ENCODE measurements at regions of chr16 and their contacts with region 1.

Region 1: GRCh38 chr16:19138601-19139000 is 24.8 kb downstream of the ITPRIPL2 start:
- DNase-seq: peak; percentile 91
- H3K4me3 ChIP-seq: no peak overlapping the region
- H3K27ac ChIP-seq: no peak overlapping the region
- H3K4me1 ChIP-seq: peaks cover 50% of the 10 kb centered on the region
- H3K27me3 ChIP-seq: no peaks in the 10 kb centered on the region
- CTCF ChIP-seq: no peak

Region 2: GRCh38 chr16:19094541-19095365 is 43.8 kb before region 1 on chr16:
- CTCF ChIA-PET with region 1: no interaction called
- dilution Hi-C with region 1: no loop called
- in situ Hi-C with region 1: no loop called
- intact Hi-C with region 1: no loop called
- DNase-seq: no peak
- H3K4me3 ChIP-seq: no peak overlapping the region
- H3K27ac ChIP-seq: no peak overlapping the region
- H3K4me1 ChIP-seq: peaks cover 7% of the 10 kb centered on the region
- H3K27me3 ChIP-seq: no peaks in the 10 kb centered on the region
- CTCF ChIP-seq: peak in 1 of 2 donors; percentile 5

Region 3: DNA sequence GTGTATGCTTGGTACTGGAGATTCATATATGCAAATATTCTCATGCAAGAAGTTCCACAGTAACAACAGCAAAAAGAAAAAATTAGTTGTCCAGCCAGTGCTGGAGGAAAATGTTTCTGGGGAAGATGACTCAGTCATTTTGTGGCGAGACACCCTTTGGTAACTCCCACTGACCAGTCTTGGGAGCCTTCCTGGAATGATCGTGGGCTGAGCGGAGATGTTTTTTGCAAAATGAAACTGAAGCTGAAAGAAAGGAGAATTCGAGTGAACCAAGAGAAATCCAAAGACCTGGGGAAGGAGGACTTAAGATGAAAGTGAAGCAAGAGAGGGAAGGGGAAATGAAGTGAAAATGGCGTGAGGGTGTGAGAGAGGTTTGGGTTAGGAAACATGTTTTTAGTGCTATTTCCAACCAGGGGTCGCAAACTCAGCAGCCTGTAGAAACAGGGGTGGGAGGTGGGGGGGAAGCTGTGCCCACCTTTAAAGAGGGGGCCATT is 19.6 kb before region 1 on chr16:
- CTCF ChIA-PET with region 1: interaction called, 5 read pairs
- dilution Hi-C with region 1: no loop called
- in situ Hi-C with region 1: no loop called
- intact Hi-C with region 1: loop called (anchors 2 kb)
- DNase-seq: peak; percentile 81
- H3K4me3 ChIP-seq: peak overlapping the region; percentile 47 to 61 (median 49)
- H3K27ac ChIP-seq: peak overlapping the region; percentile 90
- H3K4me1 ChIP-seq: peaks cover 69% of the 10 kb centered on the region
- H3K27me3 ChIP-seq: no peaks in the 10 kb centered on the region
- CTCF ChIP-seq: no peak

Region 4: DNA sequence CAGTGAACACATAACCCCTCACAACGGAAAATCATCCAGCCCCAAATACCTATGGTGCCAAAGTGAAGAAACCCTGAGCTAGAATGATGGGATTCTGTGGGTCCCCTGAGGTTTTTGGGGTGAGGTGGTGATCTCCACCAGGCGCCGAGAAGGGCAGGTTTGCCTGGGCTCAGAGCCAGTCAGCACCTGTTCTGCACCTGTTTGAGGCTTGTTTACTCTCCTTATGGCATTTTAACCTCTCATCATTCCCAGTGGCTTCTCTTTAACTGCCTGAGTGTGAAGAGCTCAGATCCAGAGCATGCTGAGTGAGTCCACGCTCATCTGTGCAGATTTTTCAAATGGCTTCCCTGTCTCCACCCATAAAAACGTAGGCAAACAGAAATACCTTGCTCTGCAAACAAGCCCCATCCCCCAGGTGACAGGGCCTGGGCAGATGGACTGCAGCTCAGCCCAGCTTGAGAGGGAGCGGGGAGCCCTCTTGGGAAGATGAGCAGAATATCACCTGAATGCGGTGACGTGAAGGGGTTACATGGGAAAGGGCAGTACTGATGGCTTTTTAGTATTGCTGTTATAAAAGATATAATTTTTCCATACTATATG is 106.8 kb after region 1 on chr16:
- CTCF ChIA-PET with region 1: no interaction called
- dilution Hi-C with region 1: no loop called
- in situ Hi-C with region 1: no loop called
- intact Hi-C with region 1: no loop called
- DNase-seq: no peak
- H3K4me3 ChIP-seq: no peak overlapping the region
- H3K27ac ChIP-seq: no peak overlapping the region
- H3K4me1 ChIP-seq: no peaks in the 10 kb centered on the region
- H3K27me3 ChIP-seq: no peaks in the 10 kb centered on the region
- CTCF ChIP-seq: no peak

Measured in mammary epithelial cell (primary cell).